ENCODE measurements at regions of chr18 and their contacts with region 1.

Region 1: DNA sequence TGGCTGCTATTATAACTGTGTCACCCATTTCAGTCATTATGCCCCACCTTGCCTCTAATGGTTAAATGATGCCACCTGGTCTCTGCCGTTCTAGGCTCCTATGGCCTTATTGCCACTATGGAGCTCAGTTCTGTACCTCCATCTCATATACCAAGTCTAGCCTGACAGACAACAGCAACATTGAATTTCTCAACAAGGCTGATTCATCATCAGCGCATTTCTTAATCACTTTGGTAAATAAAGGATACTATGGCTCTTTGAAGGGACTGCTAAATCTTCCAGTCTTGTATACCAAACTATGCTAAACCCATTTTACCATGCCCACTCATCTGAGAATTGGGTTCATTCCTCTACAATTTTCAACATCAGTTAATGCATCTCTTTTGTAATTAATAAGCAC is 784.5 kb upstream of the CELF4 start:
- DNase-seq: no peak
- H3K4me3 ChIP-seq: no peak overlapping the region
- H3K27ac ChIP-seq: no peak overlapping the region
- H3K4me1 ChIP-seq: no peaks in the 10 kb centered on the region
- H3K27me3 ChIP-seq: no peaks in the 10 kb centered on the region
- CTCF ChIP-seq: no peak
- POLR2A ChIP-seq: no peak

Region 2: GRCh38 chr18:38402509-38402908 is 52.4 kb after region 1 on chr18:
- intact Hi-C with region 1: no loop called
- DNase-seq: no peak
- H3K4me3 ChIP-seq: no peak overlapping the region
- H3K27ac ChIP-seq: no peak overlapping the region
- H3K4me1 ChIP-seq: no peaks in the 10 kb centered on the region
- H3K27me3 ChIP-seq: no peaks in the 10 kb centered on the region
- CTCF ChIP-seq: no peak
- POLR2A ChIP-seq: no peak

Region 3: DNA sequence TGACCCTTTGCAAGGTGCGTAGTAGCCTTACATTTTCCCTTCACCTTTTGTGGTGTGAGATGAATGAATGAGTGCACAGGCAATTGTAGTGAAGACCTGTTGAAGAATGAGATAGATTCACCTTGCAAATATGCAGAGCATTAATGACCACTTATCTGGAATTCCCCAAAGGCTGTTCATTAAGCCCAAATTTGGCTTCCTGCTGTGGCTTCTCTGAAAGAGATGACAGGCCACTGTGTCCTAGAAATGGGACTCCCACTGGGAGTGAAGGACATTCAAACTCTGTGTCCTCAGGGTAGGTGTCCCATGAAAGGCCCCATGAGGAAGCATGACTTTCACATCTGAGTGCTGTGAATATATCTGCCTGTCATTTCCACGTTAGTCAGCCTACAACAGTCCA is 1783.1 kb after region 1 on chr18:
- intact Hi-C with region 1: loop called (anchors 5 kb)
- DNase-seq: no peak
- H3K4me3 ChIP-seq: no peak overlapping the region
- H3K27ac ChIP-seq: no peak overlapping the region
- H3K4me1 ChIP-seq: no peaks in the 10 kb centered on the region
- H3K27me3 ChIP-seq: no peaks in the 10 kb centered on the region
- CTCF ChIP-seq: no peak
- POLR2A ChIP-seq: no peak

Measured in breast epithelium (tissue), 4 donors.